HEK293T (cell line): ENCODE measurements at regions of chr6 and their contacts with region 1.

Region 1: DNA sequence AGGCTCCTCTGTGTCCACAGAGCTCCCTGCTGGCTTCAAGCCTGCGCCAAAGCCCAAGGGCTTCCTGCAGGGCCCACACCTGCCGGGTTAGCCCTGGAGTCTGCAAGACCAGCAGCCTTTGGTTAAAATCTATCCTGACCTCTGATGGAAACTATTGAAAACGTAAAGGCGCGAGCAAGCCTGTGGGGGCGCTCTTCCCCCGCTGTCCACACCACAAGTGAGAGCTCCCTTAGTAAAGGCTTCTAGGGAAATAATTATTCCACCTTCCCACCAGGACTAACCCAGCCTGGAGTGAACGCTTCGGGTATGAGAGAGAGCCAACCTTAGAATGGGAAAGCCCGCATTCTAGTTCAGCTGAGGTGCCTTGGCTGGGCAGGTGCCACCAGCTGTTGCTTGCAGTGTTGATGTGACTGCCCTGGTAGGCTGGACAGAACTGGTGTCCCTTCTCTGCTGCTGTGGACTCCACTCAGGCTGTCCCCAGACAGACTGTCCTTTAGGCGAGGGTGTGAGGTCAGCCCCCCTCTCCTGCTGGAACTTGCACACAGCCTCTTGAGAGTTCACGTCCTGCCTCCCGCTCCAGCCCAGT is 68.7 kb downstream of the SYTL3 start:
- DNase-seq: peak; percentile 76

Region 2: DNA sequence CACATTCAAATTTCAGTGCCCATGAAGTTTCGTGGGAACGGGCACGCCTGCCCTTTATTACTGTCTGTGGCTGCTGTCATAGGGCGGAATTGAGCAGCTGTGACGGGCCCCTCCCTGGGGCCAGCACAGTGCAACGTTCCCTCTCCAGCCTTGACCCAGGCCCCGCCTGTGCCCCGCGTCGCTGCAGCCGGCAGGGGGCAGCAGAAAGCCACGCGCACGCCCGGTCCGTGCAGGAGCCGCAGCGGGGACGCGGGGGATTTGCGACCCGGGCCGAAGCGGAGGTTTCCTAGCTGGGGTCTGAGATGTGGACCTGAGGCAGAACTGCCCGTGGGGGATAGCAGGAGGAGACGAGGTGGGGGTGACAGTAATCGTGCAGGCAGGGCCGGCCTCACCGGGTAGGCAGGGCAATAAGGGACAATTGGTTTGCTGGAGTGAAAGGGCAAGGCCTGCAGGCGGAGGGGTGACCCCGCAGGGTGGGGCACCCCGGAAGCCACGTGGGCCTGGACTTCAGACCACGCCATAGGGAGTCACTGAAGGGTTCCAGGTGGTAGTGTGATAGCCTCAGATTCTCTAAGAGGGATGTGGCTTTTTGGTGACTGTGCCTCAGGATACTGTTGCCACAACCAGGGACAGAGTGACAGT is 14.3 kb before region 1 on chr6:
- CTCF ChIA-PET with region 1: interaction called, 35 read pairs
- POLR2A ChIA-PET with region 1: no interaction called
- DNase-seq: peak; percentile 95

Region 3: GRCh38 chr6:158744986-158745430 is 26.5 kb after region 1 on chr6:
- CTCF ChIA-PET with region 1: interaction called, 11 read pairs
- POLR2A ChIA-PET with region 1: no interaction called
- DNase-seq: peak; percentile 67